B cell (primary cell): ENCODE measurements at regions of chr1 and their contacts with region 1.

Region 1: GRCh38 chr1:107963601-107964335 is 1.2 kb downstream of the VAV3 start:
- DNase-seq: peak; percentile 87
- ATAC-seq: peak; percentile 53
- H3K4me3 ChIP-seq: peak overlapping the region; percentile 86 to 98 (median 90)
- H3K4me3 Mint-ChIP-seq: peak overlapping the region; percentile 98
- H3K27ac ChIP-seq: peak overlapping the region; percentile 93 to 96
- H3K27ac Mint-ChIP-seq: peak overlapping the region; percentile 99
- H3K4me1 ChIP-seq: peaks cover 36 to 42% of the 10 kb centered on the region in 2 donors
- H3K4me1 Mint-ChIP-seq: peaks cover 51% of the 10 kb centered on the region
- H3K27me3 ChIP-seq: no peaks in the 10 kb centered on the region
- H3K27me3 Mint-ChIP-seq: no peaks in the 10 kb centered on the region
- CTCF ChIP-seq: no peak

Region 2: DNA sequence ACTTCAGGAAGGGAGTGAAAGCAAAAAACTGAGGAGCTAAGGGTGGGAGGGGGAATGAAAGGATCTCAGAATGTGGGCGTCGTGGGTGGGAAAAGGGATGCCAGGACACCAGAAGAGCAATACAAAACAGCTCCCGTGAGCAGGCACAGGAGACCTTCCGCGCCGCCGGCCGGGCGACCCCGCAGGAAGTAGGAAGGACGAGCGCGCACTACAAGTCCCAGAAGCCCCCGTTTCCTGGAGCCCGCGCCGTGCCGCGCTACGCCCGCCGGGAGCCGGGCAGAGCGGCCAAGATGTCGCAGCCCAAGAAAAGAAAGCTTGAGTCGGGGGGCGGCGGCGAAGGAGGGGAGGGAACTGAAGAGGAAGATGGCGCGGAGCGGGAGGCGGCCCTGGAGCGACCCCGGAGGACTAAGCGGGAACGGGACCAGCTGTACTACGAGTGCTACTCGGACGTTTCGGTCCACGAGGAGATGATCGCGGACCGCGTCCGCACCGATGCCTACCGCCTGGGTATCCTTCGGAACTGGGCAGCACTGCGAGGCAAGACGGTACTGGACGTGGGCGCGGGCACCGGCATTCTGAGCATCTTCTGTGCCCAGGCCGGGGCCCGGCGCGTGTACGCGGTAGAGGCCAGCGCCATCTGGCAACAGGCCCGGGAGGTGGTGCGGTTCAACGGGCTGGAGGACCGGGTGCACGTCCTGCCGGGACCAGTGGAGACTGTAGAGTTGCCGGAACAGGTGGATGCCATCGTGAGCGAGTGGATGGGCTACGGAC is 907.2 kb before region 1 on chr1 and contains the start of gene PRMT6:
- CTCF ChIA-PET with region 1: no interaction called
- POLR2A ChIA-PET with region 1: no interaction called
- intact Hi-C with region 1: loop called (anchors 10 kb)
- DNase-seq: peak; percentile 87
- ATAC-seq: peak; percentile 91
- H3K4me3 ChIP-seq: peak within 1 kb of the TSS; percentile 73 to 100 (median 78)
- H3K4me3 Mint-ChIP-seq: peak within 1 kb of the TSS; percentile 99
- H3K27ac ChIP-seq: peak within 1 kb of the TSS; percentile 79 to 80
- H3K27ac Mint-ChIP-seq: peak within 1 kb of the TSS; percentile 99
- H3K4me1 ChIP-seq: peaks cover 18 to 21% of the 10 kb centered on the region in 2 donors
- H3K4me1 Mint-ChIP-seq: peaks cover 28% of the 10 kb centered on the region
- H3K27me3 ChIP-seq: no peaks in the 10 kb centered on the region
- H3K27me3 Mint-ChIP-seq: no peaks in the 10 kb centered on the region
- CTCF ChIP-seq: peak; percentile 15
- total RNA-seq, gene PRMT6: 21.6 and 23.3 TPM in 2 replicates

Region 3: DNA sequence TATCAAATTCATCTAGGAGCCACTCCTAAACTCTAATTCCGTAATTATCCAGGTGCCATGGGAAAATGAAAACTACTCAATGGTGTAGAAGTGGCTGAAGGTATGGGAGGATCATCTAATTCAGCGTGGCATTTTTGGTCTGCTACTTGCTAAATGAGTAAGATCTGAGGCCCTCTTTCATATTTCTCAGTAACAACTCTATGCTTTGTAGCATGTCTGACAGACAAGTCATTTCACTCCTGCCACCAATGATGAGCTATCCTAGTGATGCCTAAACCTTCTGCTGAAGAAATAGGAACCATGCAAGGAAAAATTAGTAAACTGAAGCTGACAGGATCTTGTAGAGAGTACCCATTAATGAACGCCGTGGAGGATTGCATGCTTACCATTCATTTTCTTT is 677.6 kb before region 1 on chr1:
- CTCF ChIA-PET with region 1: no interaction called
- POLR2A ChIA-PET with region 1: no interaction called
- intact Hi-C with region 1: no loop called
- DNase-seq: no peak
- ATAC-seq: no peak
- H3K4me3 ChIP-seq: no peak overlapping the region
- H3K4me3 Mint-ChIP-seq: no peak overlapping the region
- H3K27ac ChIP-seq: no peak overlapping the region
- H3K27ac Mint-ChIP-seq: no peak overlapping the region
- H3K4me1 ChIP-seq: no peaks in the 10 kb centered on the region
- H3K4me1 Mint-ChIP-seq: no peaks in the 10 kb centered on the region
- H3K27me3 ChIP-seq: no peaks in the 10 kb centered on the region
- H3K27me3 Mint-ChIP-seq: no peaks in the 10 kb centered on the region
- CTCF ChIP-seq: no peak

Region 4: GRCh38 chr1:107804134-107804533 is 159.6 kb before region 1 on chr1:
- CTCF ChIA-PET with region 1: interaction called, 3 read pairs
- POLR2A ChIA-PET with region 1: no interaction called
- intact Hi-C with region 1: loop called (anchors 5 kb)
- DNase-seq: peak; percentile 62
- ATAC-seq: peak; percentile 61
- H3K4me3 ChIP-seq: peak overlapping the region; percentile 35 to 76 (median 47)
- H3K4me3 Mint-ChIP-seq: peak overlapping the region; percentile 80
- H3K27ac ChIP-seq: peak overlapping the region; percentile 79 to 88
- H3K27ac Mint-ChIP-seq: peak overlapping the region; percentile 90
- H3K4me1 ChIP-seq: peaks cover 58 to 86% of the 10 kb centered on the region in 2 donors
- H3K4me1 Mint-ChIP-seq: peaks cover 91% of the 10 kb centered on the region
- H3K27me3 ChIP-seq: no peaks in the 10 kb centered on the region
- H3K27me3 Mint-ChIP-seq: no peaks in the 10 kb centered on the region
- CTCF ChIP-seq: no peak

Region 5: DNA sequence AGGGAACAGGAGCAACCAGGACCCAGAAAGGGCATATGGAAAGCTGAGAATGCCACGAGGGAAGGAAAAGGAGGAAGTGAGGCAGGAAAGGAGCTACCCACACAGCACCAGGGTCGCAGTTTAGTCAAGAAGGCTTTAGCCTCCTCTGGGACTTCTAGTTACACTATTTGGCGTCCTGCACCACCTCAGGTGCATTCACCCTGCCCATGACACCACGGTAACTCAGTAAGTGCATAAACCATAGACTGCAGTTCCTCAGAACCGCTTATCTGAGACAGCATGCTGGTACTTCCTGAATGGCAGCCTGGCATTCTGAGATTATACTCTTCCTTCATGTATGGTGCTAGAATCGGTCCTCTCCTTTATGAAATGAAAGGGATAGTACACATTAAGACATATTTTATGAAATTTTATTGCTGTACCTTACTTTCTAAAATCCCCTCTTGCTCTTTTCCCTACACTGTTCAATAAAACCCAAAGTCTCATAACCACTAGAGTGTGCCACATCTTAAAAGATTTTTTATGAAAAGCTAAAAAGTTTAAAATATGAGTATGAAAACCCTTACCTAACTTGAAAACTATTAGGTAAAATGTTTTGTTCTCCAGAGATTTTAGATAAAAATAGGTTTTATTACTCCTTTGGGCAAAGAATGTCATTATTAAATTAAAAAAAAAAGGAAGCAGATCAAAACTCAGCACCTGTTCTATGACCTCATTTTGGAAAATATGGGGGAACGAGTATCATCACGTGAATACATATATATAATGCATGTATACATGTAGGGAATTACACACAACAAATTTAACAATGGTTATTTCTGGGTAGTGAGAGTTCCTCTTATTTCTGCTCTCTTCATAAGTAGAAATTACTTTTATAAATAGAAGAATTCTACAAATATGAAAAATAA is 66.1 kb before region 1 on chr1:
- CTCF ChIA-PET with region 1: interaction called, 3 read pairs
- POLR2A ChIA-PET with region 1: interaction called, 4 read pairs
- intact Hi-C with region 1: loop called (anchors 1 kb)
- DNase-seq: peak; percentile 86
- ATAC-seq: peak; percentile 81
- H3K4me3 ChIP-seq: peak overlapping the region in 3 of 5 experiments; percentile 12 to 16 (median 13)
- H3K4me3 Mint-ChIP-seq: peak overlapping the region; percentile 56
- H3K27ac ChIP-seq: peak overlapping the region; percentile 82 to 93
- H3K27ac Mint-ChIP-seq: peak overlapping the region; percentile 94
- H3K4me1 ChIP-seq: peaks cover 83 to 87% of the 10 kb centered on the region in 2 donors
- H3K4me1 Mint-ChIP-seq: peaks cover 79% of the 10 kb centered on the region
- H3K27me3 ChIP-seq: no peaks in the 10 kb centered on the region
- H3K27me3 Mint-ChIP-seq: no peaks in the 10 kb centered on the region
- CTCF ChIP-seq: no peak

Region 6: GRCh38 chr1:107936498-107937481 is 27.0 kb before region 1 on chr1:
- CTCF ChIA-PET with region 1: interaction called, 5 read pairs
- POLR2A ChIA-PET with region 1: interaction called, 3 read pairs
- intact Hi-C with region 1: loop called (anchors 1 kb)
- DNase-seq: peak; percentile 42
- ATAC-seq: peak; percentile 54
- H3K4me3 ChIP-seq: no peak overlapping the region
- H3K4me3 Mint-ChIP-seq: peak overlapping the region; percentile 69
- H3K27ac ChIP-seq: peak overlapping the region in 1 of 2 donors; percentile 3
- H3K27ac Mint-ChIP-seq: peak overlapping the region; percentile 78
- H3K4me1 ChIP-seq: peaks cover 50 to 56% of the 10 kb centered on the region in 2 donors
- H3K4me1 Mint-ChIP-seq: peaks cover 81% of the 10 kb centered on the region
- H3K27me3 ChIP-seq: no peaks in the 10 kb centered on the region
- H3K27me3 Mint-ChIP-seq: no peaks in the 10 kb centered on the region
- CTCF ChIP-seq: no peak

Region 7: GRCh38 chr1:107976836-107977235 is 13.1 kb after region 1 on chr1:
- CTCF ChIA-PET with region 1: interaction called, 6 read pairs
- POLR2A ChIA-PET with region 1: no interaction called
- intact Hi-C with region 1: loop called (anchors 2 kb)
- DNase-seq: no peak
- ATAC-seq: no peak
- H3K4me3 ChIP-seq: no peak overlapping the region
- H3K4me3 Mint-ChIP-seq: no peak overlapping the region
- H3K27ac ChIP-seq: no peak overlapping the region
- H3K27ac Mint-ChIP-seq: no peak overlapping the region
- H3K4me1 ChIP-seq: peaks cover 0 to 5% of the 10 kb centered on the region in 2 donors
- H3K4me1 Mint-ChIP-seq: peaks cover 29% of the 10 kb centered on the region
- H3K27me3 ChIP-seq: no peaks in the 10 kb centered on the region
- H3K27me3 Mint-ChIP-seq: no peaks in the 10 kb centered on the region
- CTCF ChIP-seq: no peak

Region 8: GRCh38 chr1:108075055-108075454 is 111.3 kb after region 1 on chr1:
- CTCF ChIA-PET with region 1: no interaction called
- POLR2A ChIA-PET with region 1: interaction called, 3 read pairs
- intact Hi-C with region 1: loop called (anchors 2 kb)
- DNase-seq: peak; percentile 88
- ATAC-seq: peak; percentile 79
- H3K4me3 ChIP-seq: no peak overlapping the region
- H3K4me3 Mint-ChIP-seq: peak overlapping the region; percentile 42
- H3K27ac ChIP-seq: peak overlapping the region; percentile 67 to 71
- H3K27ac Mint-ChIP-seq: peak overlapping the region; percentile 80
- H3K4me1 ChIP-seq: peaks cover 44 to 57% of the 10 kb centered on the region in 2 donors
- H3K4me1 Mint-ChIP-seq: peaks cover 62% of the 10 kb centered on the region
- H3K27me3 ChIP-seq: no peaks in the 10 kb centered on the region
- H3K27me3 Mint-ChIP-seq: no peaks in the 10 kb centered on the region
- CTCF ChIP-seq: no peak

Region 9: GRCh38 chr1:108742253-108742652 is 778.5 kb after region 1 on chr1:
- CTCF ChIA-PET with region 1: no interaction called
- POLR2A ChIA-PET with region 1: no interaction called
- intact Hi-C with region 1: no loop called
- DNase-seq: no peak
- ATAC-seq: no peak
- H3K4me3 ChIP-seq: no peak overlapping the region
- H3K4me3 Mint-ChIP-seq: no peak overlapping the region
- H3K27ac ChIP-seq: no peak overlapping the region
- H3K27ac Mint-ChIP-seq: no peak overlapping the region
- H3K4me1 ChIP-seq: peaks cover 1 to 4% of the 10 kb centered on the region in 2 donors
- H3K4me1 Mint-ChIP-seq: peaks cover 11% of the 10 kb centered on the region
- H3K27me3 ChIP-seq: no peaks in the 10 kb centered on the region
- H3K27me3 Mint-ChIP-seq: peaks cover 5% of the 10 kb centered on the region
- CTCF ChIP-seq: no peak